CD4-positive, alpha-beta memory T cell (primary cell): ENCODE measurements at regions of chr6 and their contacts with region 1.

Region 1: DNA sequence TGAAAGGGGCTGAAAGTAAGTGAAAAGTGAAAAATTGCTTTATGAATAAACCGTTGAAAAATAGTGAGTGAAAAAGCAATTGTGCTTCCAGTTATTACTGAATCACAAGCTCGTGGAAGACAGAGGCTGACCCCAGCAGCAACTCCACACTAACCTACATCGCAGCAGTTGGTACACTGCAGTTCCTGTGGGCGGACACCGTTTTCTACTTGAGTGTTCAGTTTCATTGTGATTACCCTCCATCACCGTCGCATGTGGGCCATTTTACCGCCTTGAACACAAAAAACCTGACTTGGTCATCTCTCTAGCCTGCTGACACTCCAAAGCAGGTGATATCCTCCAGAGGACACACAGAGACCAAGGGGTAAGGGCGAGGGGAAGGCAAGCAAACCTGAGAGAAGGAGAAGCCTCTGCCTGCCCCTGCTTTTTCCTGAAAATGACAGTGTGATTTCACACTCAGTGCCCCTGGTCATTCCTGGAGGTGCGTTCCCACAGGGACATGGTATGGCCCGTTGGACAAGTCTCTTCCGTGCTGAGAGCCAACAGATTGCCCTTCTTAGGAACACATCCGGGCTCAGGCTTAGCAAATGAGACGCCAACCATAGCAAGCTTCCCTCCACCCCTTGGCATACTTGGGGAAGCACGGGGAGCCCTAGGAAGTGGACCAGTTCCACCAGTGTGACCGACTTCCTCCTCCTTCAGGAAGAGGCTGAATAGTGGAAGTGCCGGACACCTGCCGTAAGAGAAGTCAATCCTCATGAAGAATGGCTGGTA is 28.5 kb downstream of the PRDM1 start:
- DNase-seq: peak in 3 of 5 donors; percentile 33 to 64 (median 39)
- H3K4me3 ChIP-seq: peak overlapping the region in 1 of 2 donors; percentile 30
- H3K4me3 Mint-ChIP-seq: peak overlapping the region; percentile 64 to 86 (median 75)
- H3K27ac ChIP-seq: peak overlapping the region; percentile 41
- H3K27ac Mint-ChIP-seq: peak overlapping the region; percentile 54 to 90 (median 85)
- H3K4me1 ChIP-seq: peaks cover 88% of the 10 kb centered on the region
- H3K4me1 Mint-ChIP-seq: peaks cover 65 to 98% (median 81%) of the 10 kb centered on the region in 4 donors
- H3K27me3 ChIP-seq: no peaks in the 10 kb centered on the region
- H3K27me3 Mint-ChIP-seq: peaks cover 0 to 2% of the 10 kb centered on the region in 2 donors

Region 2: GRCh38 chr6:106103728-106104109 is 11.0 kb before region 1 on chr6:
- CTCF ChIA-PET with region 1: interaction called, 19 read pairs
- POLR2A ChIA-PET with region 1: interaction called, 178 read pairs
- intact Hi-C with region 1: loop called (anchors 1 kb)
- DNase-seq: peak; percentile 50 to 86 (median 51)
- H3K4me3 ChIP-seq: peak overlapping the region; percentile 86 to 89
- H3K4me3 Mint-ChIP-seq: peak overlapping the region; percentile 95 to 99 (median 97)
- H3K27ac ChIP-seq: peak overlapping the region; percentile 69
- H3K27ac Mint-ChIP-seq: peak overlapping the region; percentile 91 to 98 (median 95)
- H3K4me1 ChIP-seq: peaks cover 75% of the 10 kb centered on the region
- H3K4me1 Mint-ChIP-seq: peaks cover 50 to 86% (median 68%) of the 10 kb centered on the region in 4 donors
- H3K27me3 ChIP-seq: no peaks in the 10 kb centered on the region
- H3K27me3 Mint-ChIP-seq: no peaks in the 10 kb centered on the region

Region 3: DNA sequence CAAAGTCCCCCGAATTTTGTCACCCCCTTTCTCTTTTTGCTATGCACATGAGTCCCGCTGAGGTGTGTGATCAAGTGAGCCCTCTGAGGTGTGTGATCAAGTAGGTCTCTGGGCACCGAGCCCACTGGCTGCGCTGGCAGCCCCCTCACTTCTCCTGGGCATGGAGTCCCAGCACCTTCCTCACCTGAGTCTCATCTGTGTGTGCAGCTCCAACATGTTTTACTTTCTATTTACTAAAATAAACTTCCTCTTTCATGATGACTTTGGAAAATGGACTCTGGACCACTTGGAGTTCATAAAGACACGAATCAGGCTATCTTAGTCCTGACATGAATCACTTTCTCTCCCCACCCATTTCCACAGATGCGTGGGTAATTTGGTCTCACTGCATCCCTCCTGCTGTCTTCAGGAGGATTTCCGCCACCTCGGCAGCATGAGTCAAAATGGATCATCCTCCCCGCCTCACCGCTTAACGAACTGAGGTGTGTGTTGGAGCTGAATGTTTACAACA is 11.3 kb after region 1 on chr6:
- CTCF ChIA-PET with region 1: interaction called, 9 read pairs
- POLR2A ChIA-PET with region 1: interaction called, 11 read pairs
- intact Hi-C with region 1: no loop called
- DNase-seq: peak in 4 of 5 donors; percentile 33 to 53 (median 38)
- H3K4me3 ChIP-seq: peak overlapping the region; percentile 5 to 36
- H3K4me3 Mint-ChIP-seq: peak overlapping the region; percentile 70 to 93 (median 88)
- H3K27ac ChIP-seq: no peak overlapping the region
- H3K27ac Mint-ChIP-seq: peak overlapping the region; percentile 69 to 95 (median 88)
- H3K4me1 ChIP-seq: peaks cover 14% of the 10 kb centered on the region
- H3K4me1 Mint-ChIP-seq: peaks cover 14 to 34% (median 19%) of the 10 kb centered on the region in 4 donors
- H3K27me3 ChIP-seq: no peaks in the 10 kb centered on the region
- H3K27me3 Mint-ChIP-seq: no peaks in the 10 kb centered on the region

Region 4: DNA sequence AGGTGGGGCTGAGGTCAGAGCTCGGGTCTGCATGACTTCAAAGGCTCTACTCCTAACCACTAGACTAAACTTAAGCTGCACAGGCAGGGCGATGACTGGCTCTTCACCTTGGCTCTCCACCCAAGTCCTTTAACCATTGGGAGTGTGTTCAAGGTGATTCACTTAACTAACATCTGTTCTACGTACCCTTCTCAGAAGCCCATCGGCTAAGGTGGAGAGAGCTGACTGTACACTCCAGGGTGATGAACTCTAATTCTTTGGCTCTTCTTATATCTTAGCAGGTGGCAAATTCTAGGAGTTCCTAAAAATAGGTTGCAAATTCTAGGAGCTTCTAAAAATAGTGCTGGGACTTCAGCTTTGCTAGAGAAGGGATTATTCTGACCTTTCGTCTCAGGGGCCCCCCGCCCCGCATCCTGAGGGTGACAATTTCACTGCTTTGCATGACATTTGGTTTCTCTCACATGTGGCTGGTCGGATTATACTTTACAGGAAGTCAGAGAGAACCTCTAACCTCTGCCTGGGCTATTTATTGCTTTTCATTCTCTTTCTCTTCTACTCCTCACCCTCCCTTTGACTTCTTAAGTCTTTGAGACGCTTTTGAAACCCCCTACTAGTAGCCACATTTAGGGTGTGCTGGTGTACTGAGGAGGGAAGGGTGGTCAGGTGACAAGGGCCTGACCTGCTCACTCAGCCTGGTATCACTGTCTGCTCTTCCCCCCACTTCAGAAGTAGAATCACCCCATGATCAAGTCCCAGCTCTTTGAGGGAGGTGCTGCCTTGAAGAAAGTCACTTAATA is 27.0 kb after region 1 on chr6:
- CTCF ChIA-PET with region 1: interaction called, 6 read pairs
- POLR2A ChIA-PET with region 1: interaction called, 24 read pairs
- intact Hi-C with region 1: loop called (anchors 2 kb)
- DNase-seq: peak; percentile 17 to 46 (median 31)
- H3K4me3 ChIP-seq: peak overlapping the region in 1 of 2 donors; percentile 5
- H3K4me3 Mint-ChIP-seq: peak overlapping the region in 7 of 8 donors; percentile 37 to 75 (median 71)
- H3K27ac ChIP-seq: no peak overlapping the region
- H3K27ac Mint-ChIP-seq: peak overlapping the region; percentile 74 to 90 (median 87)
- H3K4me1 ChIP-seq: peaks cover 44% of the 10 kb centered on the region
- H3K4me1 Mint-ChIP-seq: peaks cover 24 to 54% (median 34%) of the 10 kb centered on the region in 4 donors
- H3K27me3 ChIP-seq: no peaks in the 10 kb centered on the region
- H3K27me3 Mint-ChIP-seq: no peaks in the 10 kb centered on the region

Region 5: GRCh38 chr6:106163446-106163965 is 48.8 kb after region 1 on chr6:
- CTCF ChIA-PET with region 1: interaction called, 11 read pairs
- POLR2A ChIA-PET with region 1: interaction called, 20 read pairs
- intact Hi-C with region 1: loop called (anchors 5 kb)
- DNase-seq: peak; percentile 44 to 73 (median 51)
- H3K4me3 ChIP-seq: peak overlapping the region in 1 of 2 donors; percentile 27
- H3K4me3 Mint-ChIP-seq: peak overlapping the region; percentile 46 to 78 (median 68)
- H3K27ac ChIP-seq: peak overlapping the region; percentile 57
- H3K27ac Mint-ChIP-seq: peak overlapping the region; percentile 74 to 98 (median 93)
- H3K4me1 ChIP-seq: peaks cover 32% of the 10 kb centered on the region
- H3K4me1 Mint-ChIP-seq: peaks cover 30 to 56% (median 42%) of the 10 kb centered on the region in 4 donors
- H3K27me3 ChIP-seq: no peaks in the 10 kb centered on the region
- H3K27me3 Mint-ChIP-seq: no peaks in the 10 kb centered on the region